Transverse colon (tissue), 4 donors: ENCODE measurements at regions of chr6 and their contacts with region 1.

Region 1: DNA sequence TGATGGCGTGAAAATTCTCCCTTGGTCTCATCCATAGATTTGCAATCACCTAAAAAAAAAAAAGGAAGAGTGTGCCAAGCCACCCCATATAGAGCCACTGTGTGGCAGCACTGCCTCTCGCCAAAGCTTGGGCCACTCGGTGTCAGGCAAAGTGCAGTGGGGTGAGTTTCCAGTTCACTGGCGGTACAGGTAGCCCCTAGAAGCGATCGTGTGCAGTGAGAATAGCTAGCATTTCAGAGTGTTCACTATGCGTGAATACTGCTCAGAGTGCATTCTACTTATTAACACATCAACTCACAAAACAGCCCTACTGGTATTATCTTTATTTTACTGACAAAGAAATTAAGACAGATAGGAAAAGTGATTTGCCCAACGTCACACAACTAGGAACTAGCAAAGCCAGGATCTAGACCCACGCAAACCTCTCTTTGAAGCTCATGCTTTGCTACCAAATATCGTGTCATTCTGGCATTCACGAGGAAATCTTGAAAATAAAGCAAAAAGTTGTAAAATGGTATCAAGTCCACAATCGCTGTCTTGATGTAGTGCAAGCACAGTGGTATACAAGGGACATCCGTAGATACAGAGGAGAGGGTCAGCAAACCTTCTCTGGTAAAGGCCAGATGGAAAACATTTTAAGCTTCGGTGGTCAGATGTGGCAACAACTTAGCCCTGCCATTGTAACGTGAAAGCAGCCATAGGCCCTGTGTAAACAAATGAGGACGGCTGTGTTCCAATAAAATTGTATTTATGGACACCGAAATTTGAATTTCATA is 10.4 kb upstream of the GCNT2 start:
- DNase-seq: peak; percentile 73
- H3K4me3 ChIP-seq: peak overlapping the region in 2 of 4 donors; percentile 12 to 31
- H3K27ac ChIP-seq: peak overlapping the region in 3 of 4 donors; percentile 37 to 54 (median 42)
- H3K4me1 ChIP-seq: peaks cover 0 to 8% (median 5%) of the 10 kb centered on the region in 4 donors
- H3K27me3 ChIP-seq: no peaks in the 10 kb centered on the region
- CTCF ChIP-seq: peak; percentile 67 to 75 (median 73)
- EP300 ChIP-seq: no peak
- POLR2A ChIP-seq: no peak

Region 2: GRCh38 chr6:10617008-10617696 is 106.4 kb after region 1 on chr6:
- in situ Hi-C with region 1: no loop called
- intact Hi-C with region 1: loop called (anchors 5 kb)
- DNase-seq: no peak
- H3K4me3 ChIP-seq: no peak overlapping the region
- H3K27ac ChIP-seq: peak overlapping the region in 1 of 4 donors; percentile 3
- H3K4me1 ChIP-seq: peaks cover 0 to 16% (median 7%) of the 10 kb centered on the region in 4 donors
- H3K27me3 ChIP-seq: no peaks in the 10 kb centered on the region
- CTCF ChIP-seq: no peak
- EP300 ChIP-seq: no peak
- POLR2A ChIP-seq: no peak

Region 3: DNA sequence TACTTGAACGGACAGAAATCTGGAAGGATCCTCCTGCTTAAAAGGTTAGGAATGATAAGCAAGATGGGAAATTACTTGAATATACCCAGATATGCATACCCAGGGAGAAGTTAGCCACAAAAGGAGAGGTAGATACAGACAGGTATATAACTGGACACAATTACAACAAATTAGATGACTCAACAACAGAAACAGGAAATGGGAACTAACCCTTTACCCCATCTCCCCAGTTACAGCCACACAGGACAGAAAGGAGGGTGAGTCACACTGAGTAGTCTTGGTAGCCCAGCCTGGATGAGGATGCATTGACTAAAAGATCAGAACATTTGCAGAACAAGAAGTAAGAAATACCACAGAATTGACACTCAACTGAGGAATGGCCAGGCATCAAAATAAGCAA is 122.4 kb after region 1 on chr6:
- in situ Hi-C with region 1: no loop called
- intact Hi-C with region 1: no loop called
- DNase-seq: no peak
- H3K4me3 ChIP-seq: no peak overlapping the region
- H3K27ac ChIP-seq: no peak overlapping the region
- H3K4me1 ChIP-seq: no peaks in the 10 kb centered on the region
- H3K27me3 ChIP-seq: no peaks in the 10 kb centered on the region
- CTCF ChIP-seq: no peak
- EP300 ChIP-seq: no peak
- POLR2A ChIP-seq: no peak

Region 4: GRCh38 chr6:10694302-10695085 is 183.7 kb after region 1 on chr6 and contains the starts of genes C6orf52 and PAK1IP1:
- in situ Hi-C with region 1: loop called in 2 of 4 experiments (anchors 10 kb)
- intact Hi-C with region 1: loop called (anchors 2 kb)
- DNase-seq: peak; percentile 95
- H3K4me3 ChIP-seq: peak within 1 kb of the TSS; percentile 76 to 93 (median 78)
- H3K27ac ChIP-seq: peak within 1 kb of the TSS; percentile 90 to 97 (median 93)
- H3K4me1 ChIP-seq: peaks cover 11 to 25% (median 21%) of the 10 kb centered on the region in 4 donors
- H3K27me3 ChIP-seq: no peaks in the 10 kb centered on the region
- CTCF ChIP-seq: no peak
- EP300 ChIP-seq: no peak
- POLR2A ChIP-seq: peak; percentile 92
- total RNA-seq, gene C6orf52: not detected
- total RNA-seq, gene PAK1IP1: 5.6 to 6.4 (median 6.0) TPM